ENCODE measurements at regions of chr1 and their contacts with region 1.

Region 1: DNA sequence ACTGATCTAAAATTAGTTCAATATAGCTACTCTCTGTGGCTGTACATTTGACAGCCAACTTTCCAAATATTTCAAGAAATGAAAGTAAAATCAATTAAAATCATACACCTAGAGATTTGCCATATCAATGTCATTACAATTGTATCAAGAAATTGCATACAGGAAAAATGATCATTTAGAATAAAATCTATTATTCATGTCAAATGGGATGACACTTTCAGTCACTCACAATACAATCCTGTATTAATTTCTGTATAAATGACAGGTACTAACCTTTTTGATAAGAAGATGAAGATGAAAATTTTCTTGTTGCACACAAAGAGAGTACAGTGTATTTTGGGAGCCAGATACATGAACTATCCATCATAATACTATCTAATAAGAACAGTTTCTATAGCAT is 1588.9 kb upstream of the PRMT6 start:
- DNase-seq: no peak
- H3K4me3 ChIP-seq: no peak overlapping the region
- H3K4me3 Mint-ChIP-seq: no peak overlapping the region
- H3K27ac ChIP-seq: no peak overlapping the region
- H3K27ac Mint-ChIP-seq: no peak overlapping the region
- H3K4me1 ChIP-seq: no peaks in the 10 kb centered on the region
- H3K4me1 Mint-ChIP-seq: no peaks in the 10 kb centered on the region
- H3K27me3 ChIP-seq: no peaks in the 10 kb centered on the region
- H3K27me3 Mint-ChIP-seq: no peaks in the 10 kb centered on the region
- CTCF ChIP-seq: no peak

Region 2: DNA sequence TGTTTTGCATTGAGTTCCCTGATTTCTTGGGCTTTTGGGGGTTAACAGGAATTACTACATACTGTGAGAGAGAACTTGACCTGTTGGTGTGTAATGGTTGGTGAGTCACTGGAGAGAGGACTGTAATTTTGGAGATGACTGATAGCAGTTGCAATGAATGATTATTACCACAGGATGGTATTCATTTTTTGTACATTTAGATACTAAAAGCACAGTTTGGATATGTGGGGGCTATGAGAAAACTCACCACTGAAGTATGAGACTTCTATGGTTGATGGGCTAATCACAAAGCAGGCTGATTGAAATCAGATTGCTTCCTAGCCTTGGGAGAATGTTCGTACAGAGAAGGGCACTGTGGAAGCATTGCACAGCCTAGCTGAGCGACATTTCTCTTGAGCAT is 17.7 kb after region 1 on chr1:
- intact Hi-C with region 1: loop called in 1 of 2 experiments (anchors 1 kb)
- DNase-seq: no peak
- H3K4me3 ChIP-seq: no peak overlapping the region
- H3K4me3 Mint-ChIP-seq: no peak overlapping the region
- H3K27ac ChIP-seq: no peak overlapping the region
- H3K27ac Mint-ChIP-seq: no peak overlapping the region
- H3K4me1 ChIP-seq: no peaks in the 10 kb centered on the region
- H3K4me1 Mint-ChIP-seq: no peaks in the 10 kb centered on the region
- H3K27me3 ChIP-seq: no peaks in the 10 kb centered on the region
- H3K27me3 Mint-ChIP-seq: no peaks in the 10 kb centered on the region
- CTCF ChIP-seq: no peak

Region 3: GRCh38 chr1:105516068-105516467 is 48.5 kb after region 1 on chr1:
- intact Hi-C with region 1: no loop called
- DNase-seq: no peak
- H3K4me3 ChIP-seq: no peak overlapping the region
- H3K4me3 Mint-ChIP-seq: no peak overlapping the region
- H3K27ac ChIP-seq: no peak overlapping the region
- H3K27ac Mint-ChIP-seq: no peak overlapping the region
- H3K4me1 ChIP-seq: no peaks in the 10 kb centered on the region
- H3K4me1 Mint-ChIP-seq: no peaks in the 10 kb centered on the region
- H3K27me3 ChIP-seq: no peaks in the 10 kb centered on the region
- H3K27me3 Mint-ChIP-seq: no peaks in the 10 kb centered on the region
- CTCF ChIP-seq: no peak

Measured in CD14-positive monocyte (primary cell).